Sigmoid colon (tissue), 7 donors: ENCODE measurements at regions of chr12 and their contacts with region 1.

Region 1: GRCh38 chr12:6062757-6063735 is 61.4 kb downstream of the VWF start:
- DNase-seq: peak; percentile 76
- H3K4me3 ChIP-seq: no peak overlapping the region
- H3K27ac ChIP-seq: no peak overlapping the region
- H3K4me1 ChIP-seq: peaks cover 0 to 6% (median 2%) of the 10 kb centered on the region in 4 donors
- H3K27me3 ChIP-seq: no peaks in the 10 kb centered on the region
- CTCF ChIP-seq: peak; percentile 73 to 95 (median 90)
- EP300 ChIP-seq: no peak
- POLR2A ChIP-seq: no peak

Region 2: GRCh38 chr12:6154730-6155459 is 91.8 kb after region 1 on chr12:
- intact Hi-C with region 1: no loop called
- DNase-seq: peak; percentile 74
- H3K4me3 ChIP-seq: no peak overlapping the region
- H3K27ac ChIP-seq: peak overlapping the region in 1 of 4 donors; percentile 23
- H3K4me1 ChIP-seq: no peaks in the 10 kb centered on the region
- H3K27me3 ChIP-seq: no peaks in the 10 kb centered on the region
- CTCF ChIP-seq: no peak
- EP300 ChIP-seq: no peak
- POLR2A ChIP-seq: no peak

Region 3: DNA sequence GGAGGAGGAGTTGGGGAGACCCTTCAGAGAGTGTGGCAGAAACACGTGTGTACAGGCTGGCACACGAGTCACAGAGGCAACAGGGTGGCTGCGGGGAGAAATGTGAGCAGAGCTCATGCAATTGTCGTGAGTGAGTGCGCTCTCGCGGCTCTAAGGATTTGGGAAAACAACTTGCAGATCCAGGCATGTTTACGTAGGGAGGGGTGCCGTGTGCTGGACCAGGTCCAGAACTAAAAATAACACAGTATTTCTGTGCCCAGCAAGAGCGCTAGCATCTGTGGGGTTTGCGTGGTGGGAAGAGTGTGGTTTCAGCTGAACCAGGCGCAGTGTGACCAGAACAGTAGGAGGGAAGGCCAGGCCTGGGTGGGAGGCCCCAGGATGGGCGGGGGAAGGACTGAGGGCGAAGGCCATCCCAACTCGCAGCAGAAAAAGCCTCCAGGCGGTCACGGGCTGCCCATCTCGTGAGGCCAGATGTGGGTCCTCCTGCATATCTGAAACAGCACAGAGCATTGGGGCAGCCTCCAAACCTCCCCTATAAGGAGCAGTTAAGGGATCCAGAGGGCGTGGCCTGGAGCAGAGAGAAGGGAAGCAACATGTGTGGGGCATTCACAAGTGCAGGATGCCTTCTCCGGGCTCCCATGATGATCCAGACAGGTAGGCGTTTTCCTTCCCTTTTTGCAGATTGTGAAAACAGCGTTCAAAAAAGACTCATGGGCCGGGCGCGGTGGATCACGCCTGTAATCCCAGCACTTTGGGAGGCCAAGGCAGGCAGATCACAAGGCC is 119.3 kb after region 1 on chr12:
- intact Hi-C with region 1: loop called (anchors 5 kb)
- DNase-seq: peak; percentile 91
- H3K4me3 ChIP-seq: peak overlapping the region in 1 of 4 donors; percentile 12
- H3K27ac ChIP-seq: peak overlapping the region; percentile 76 to 88 (median 80)
- H3K4me1 ChIP-seq: peaks cover 0 to 60% (median 45%) of the 10 kb centered on the region in 4 donors
- H3K27me3 ChIP-seq: no peaks in the 10 kb centered on the region
- CTCF ChIP-seq: no peak
- EP300 ChIP-seq: no peak
- POLR2A ChIP-seq: no peak

Region 4: DNA sequence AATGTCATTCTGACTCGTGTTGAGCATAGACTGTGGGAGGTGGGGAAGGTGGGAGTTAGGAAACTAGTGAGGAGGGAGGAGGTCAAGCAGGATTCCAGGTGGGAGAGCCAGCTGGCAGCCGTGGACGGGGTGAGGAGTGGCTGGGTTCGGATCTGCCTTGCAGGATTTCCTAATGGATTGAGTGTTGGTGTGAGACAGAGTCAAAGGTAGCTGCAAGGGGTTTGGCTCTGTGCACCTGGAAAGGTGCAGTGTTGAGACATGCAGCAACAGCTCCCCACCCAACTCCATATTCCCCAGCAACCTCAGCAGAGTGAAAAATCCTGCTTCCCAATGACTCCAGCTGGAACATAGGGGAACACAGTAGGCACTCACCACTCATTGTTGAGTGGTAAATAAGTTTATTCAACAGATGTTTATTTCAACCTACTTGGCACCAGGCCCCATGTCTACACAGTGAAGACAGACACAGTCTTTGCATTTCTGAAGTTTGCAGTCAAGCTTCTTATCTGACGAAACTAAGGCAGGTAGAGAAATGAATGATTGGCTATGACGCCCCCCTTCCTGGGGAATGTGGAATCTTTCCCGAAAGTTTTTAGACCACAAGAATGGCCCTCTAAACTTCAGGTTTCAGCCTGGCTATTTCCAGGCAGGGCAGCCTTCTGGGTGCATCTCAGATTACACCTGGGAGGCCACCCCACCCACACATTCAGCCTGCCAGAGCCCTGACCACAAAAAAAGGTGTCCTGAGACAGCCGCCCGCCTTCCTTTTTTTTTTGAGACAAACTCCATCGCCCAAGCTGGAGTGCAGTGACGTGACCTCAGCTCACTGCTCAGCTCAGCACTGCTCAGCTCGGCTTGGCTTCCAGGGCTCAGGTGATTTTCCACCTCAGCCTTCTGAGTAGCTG is 209.5 kb after region 1 on chr12:
- intact Hi-C with region 1: no loop called
- DNase-seq: peak; percentile 21
- H3K4me3 ChIP-seq: no peak overlapping the region
- H3K27ac ChIP-seq: no peak overlapping the region
- H3K4me1 ChIP-seq: peaks cover 0 to 22% (median 14%) of the 10 kb centered on the region in 4 donors
- H3K27me3 ChIP-seq: no peaks in the 10 kb centered on the region
- CTCF ChIP-seq: no peak
- EP300 ChIP-seq: no peak
- POLR2A ChIP-seq: no peak

Region 5: GRCh38 chr12:6285063-6285477 is 222.0 kb after region 1 on chr12:
- intact Hi-C with region 1: loop called (anchors 1 kb)
- DNase-seq: peak; percentile 83
- H3K4me3 ChIP-seq: no peak overlapping the region
- H3K27ac ChIP-seq: no peak overlapping the region
- H3K4me1 ChIP-seq: peaks cover 0 to 16% (median 6%) of the 10 kb centered on the region in 4 donors
- H3K27me3 ChIP-seq: no peaks in the 10 kb centered on the region
- CTCF ChIP-seq: peak; percentile 82 to 93 (median 90)
- EP300 ChIP-seq: peak in 1 of 4 donors; percentile 7
- POLR2A ChIP-seq: no peak